Activated CD4-positive, alpha-beta memory T cell treated with anti-CD3 and anti-CD28 coated beads, Interleukin-2, amount 10 ng/mL, durations not matched to agents 7 days and 5 days (primary cell): ENCODE measurements at regions of chr20 and their contacts with region 1.

Region 1: DNA sequence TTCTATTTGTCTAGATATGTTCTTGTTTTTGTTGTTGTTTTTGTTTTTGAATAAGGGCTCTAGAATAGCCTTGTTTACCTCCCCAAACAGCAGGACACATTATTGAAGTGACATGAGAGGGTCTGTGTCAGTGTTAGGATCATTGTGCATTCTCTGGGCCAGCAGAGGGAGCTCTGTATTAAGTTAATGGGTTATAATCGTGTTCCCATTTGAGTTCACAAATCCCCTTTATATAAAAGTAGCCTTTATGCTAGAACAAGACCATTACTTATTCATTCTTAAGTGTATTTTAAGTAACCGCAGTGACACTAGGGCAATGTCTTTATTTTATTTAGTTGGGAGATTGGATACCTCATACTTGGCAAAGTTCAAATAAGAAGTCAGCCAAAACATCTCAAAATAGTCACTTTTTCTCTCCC is 44.8 kb downstream of the STK4 start:
- DNase-seq: peak; percentile 41
- H3K4me3 Mint-ChIP-seq: no peak overlapping the region
- H3K27ac Mint-ChIP-seq: no peak overlapping the region
- H3K4me1 Mint-ChIP-seq: peaks cover 46% of the 10 kb centered on the region
- H3K27me3 Mint-ChIP-seq: no peaks in the 10 kb centered on the region

Region 2: GRCh38 chr20:44930516-44931168 is 80.5 kb before region 1 on chr20:
- CTCF ChIA-PET with region 1: no interaction called
- POLR2A ChIA-PET with region 1: no interaction called
- DNase-seq: no peak
- H3K4me3 Mint-ChIP-seq: no peak overlapping the region
- H3K27ac Mint-ChIP-seq: no peak overlapping the region
- H3K4me1 Mint-ChIP-seq: no peaks in the 10 kb centered on the region
- H3K27me3 Mint-ChIP-seq: no peaks in the 10 kb centered on the region

Region 3: GRCh38 chr20:44997171-44998067 is 13.7 kb before region 1 on chr20:
- CTCF ChIA-PET with region 1: interaction called, 15 read pairs
- POLR2A ChIA-PET with region 1: interaction called, 6 read pairs
- DNase-seq: no peak
- H3K4me3 Mint-ChIP-seq: no peak overlapping the region
- H3K27ac Mint-ChIP-seq: no peak overlapping the region
- H3K4me1 Mint-ChIP-seq: peaks cover 41% of the 10 kb centered on the region
- H3K27me3 Mint-ChIP-seq: no peaks in the 10 kb centered on the region